Activated B cell treated with CpG ODN at 0.5 μM for 24 hours (primary cell): ENCODE measurements at regions of chrX and their contacts with region 1.

Region 1: GRCh38 chrX:71128915-71129765 is 10.7 kb downstream of the MED12 start:
- DNase-seq: peak; percentile 52
- ATAC-seq: peak; percentile 94
- H3K4me3 Mint-ChIP-seq: no peak overlapping the region
- H3K27ac Mint-ChIP-seq: peak overlapping the region; percentile 19
- H3K4me1 Mint-ChIP-seq: peaks cover 9% of the 10 kb centered on the region
- H3K27me3 Mint-ChIP-seq: no peaks in the 10 kb centered on the region
- CTCF ChIP-seq: no peak

Region 2: DNA sequence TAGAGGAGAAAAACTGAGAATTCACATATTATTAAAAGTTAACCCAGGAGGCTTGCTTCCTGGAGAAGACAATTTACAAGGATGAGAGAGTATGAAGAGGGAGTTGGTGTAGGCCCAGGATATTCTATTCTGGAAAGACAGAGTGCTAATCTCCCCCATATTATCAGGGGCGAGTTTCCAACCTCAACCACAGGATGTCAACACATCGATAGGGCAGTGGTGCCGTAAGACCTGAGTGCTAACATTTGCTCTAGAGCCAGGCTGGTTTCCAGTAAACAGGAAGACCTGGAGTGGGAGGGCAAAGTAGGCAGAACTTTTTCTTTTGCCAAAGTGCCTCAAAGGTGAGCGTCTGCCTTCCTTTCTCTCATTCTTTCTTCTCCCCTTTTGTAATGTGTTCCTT is 897.5 kb before region 1 on chrX:
- CTCF ChIA-PET with region 1: no interaction called
- POLR2A ChIA-PET with region 1: no interaction called
- intact Hi-C with region 1: no loop called
- DNase-seq: no peak
- ATAC-seq: no peak
- H3K4me3 Mint-ChIP-seq: no peak overlapping the region
- H3K27ac Mint-ChIP-seq: no peak overlapping the region
- H3K4me1 Mint-ChIP-seq: no peaks in the 10 kb centered on the region
- H3K27me3 Mint-ChIP-seq: no peaks in the 10 kb centered on the region
- CTCF ChIP-seq: no peak

Region 3: GRCh38 chrX:70970482-70970995 is 158.6 kb before region 1 on chrX:
- CTCF ChIA-PET with region 1: interaction called, 3 read pairs
- POLR2A ChIA-PET with region 1: no interaction called
- intact Hi-C with region 1: loop called (anchors 1 kb)
- DNase-seq: no peak
- ATAC-seq: no peak
- H3K4me3 Mint-ChIP-seq: peak overlapping the region; percentile 28
- H3K27ac Mint-ChIP-seq: no peak overlapping the region
- H3K4me1 Mint-ChIP-seq: peaks cover 7% of the 10 kb centered on the region
- H3K27me3 Mint-ChIP-seq: no peaks in the 10 kb centered on the region
- CTCF ChIP-seq: no peak

Region 4: GRCh38 chrX:70998411-70999027 is 130.6 kb before region 1 on chrX:
- CTCF ChIA-PET with region 1: no interaction called
- POLR2A ChIA-PET with region 1: no interaction called
- intact Hi-C with region 1: loop called (anchors 1 kb)
- DNase-seq: no peak
- ATAC-seq: no peak
- H3K4me3 Mint-ChIP-seq: no peak overlapping the region
- H3K27ac Mint-ChIP-seq: no peak overlapping the region
- H3K4me1 Mint-ChIP-seq: no peaks in the 10 kb centered on the region
- H3K27me3 Mint-ChIP-seq: no peaks in the 10 kb centered on the region
- CTCF ChIP-seq: no peak

Region 5: GRCh38 chrX:71103110-71103983 is 25.8 kb before region 1 on chrX:
- CTCF ChIA-PET with region 1: interaction called, 32 read pairs
- POLR2A ChIA-PET with region 1: interaction called, 7 read pairs
- intact Hi-C with region 1: loop called (anchors 1 kb)
- DNase-seq: no peak
- ATAC-seq: peak; percentile 82
- H3K4me3 Mint-ChIP-seq: peak overlapping the region; percentile 62
- H3K27ac Mint-ChIP-seq: peak overlapping the region; percentile 83
- H3K4me1 Mint-ChIP-seq: peaks cover 56% of the 10 kb centered on the region
- H3K27me3 Mint-ChIP-seq: no peaks in the 10 kb centered on the region
- CTCF ChIP-seq: no peak

Region 6: GRCh38 chrX:71111141-71111843 is 17.8 kb before region 1 on chrX and contains the start of gene IL2RG:
- CTCF ChIA-PET with region 1: interaction called, 6 read pairs
- POLR2A ChIA-PET with region 1: interaction called, 12 read pairs
- intact Hi-C with region 1: loop called (anchors 2 kb)
- DNase-seq: peak; percentile 37
- ATAC-seq: peak; percentile 90
- H3K4me3 Mint-ChIP-seq: peak within 1 kb of the TSS; percentile 95
- H3K27ac Mint-ChIP-seq: peak within 1 kb of the TSS; percentile 99
- H3K4me1 Mint-ChIP-seq: peaks cover 67% of the 10 kb centered on the region
- H3K27me3 Mint-ChIP-seq: no peaks in the 10 kb centered on the region
- CTCF ChIP-seq: no peak
- total RNA-seq, gene IL2RG: 261 and 264 TPM in 2 replicates

Region 7: GRCh38 chrX:71118032-71118984 is 10.8 kb before region 1 on chrX and contains the start of gene MED12:
- CTCF ChIA-PET with region 1: interaction called, 3 read pairs
- POLR2A ChIA-PET with region 1: interaction called, 21 read pairs
- intact Hi-C with region 1: loop called (anchors 1 kb)
- DNase-seq: peak; percentile 76
- ATAC-seq: peak; percentile 96
- H3K4me3 Mint-ChIP-seq: peak within 1 kb of the TSS; percentile 85
- H3K27ac Mint-ChIP-seq: peak within 1 kb of the TSS; percentile 89
- H3K4me1 Mint-ChIP-seq: peaks cover 16% of the 10 kb centered on the region
- H3K27me3 Mint-ChIP-seq: no peaks in the 10 kb centered on the region
- CTCF ChIP-seq: no peak
- total RNA-seq, gene MED12: 81.7 and 102 TPM in 2 replicates